ENCODE measurements at regions of chr10 and their contacts with region 1.

Region 1: DNA sequence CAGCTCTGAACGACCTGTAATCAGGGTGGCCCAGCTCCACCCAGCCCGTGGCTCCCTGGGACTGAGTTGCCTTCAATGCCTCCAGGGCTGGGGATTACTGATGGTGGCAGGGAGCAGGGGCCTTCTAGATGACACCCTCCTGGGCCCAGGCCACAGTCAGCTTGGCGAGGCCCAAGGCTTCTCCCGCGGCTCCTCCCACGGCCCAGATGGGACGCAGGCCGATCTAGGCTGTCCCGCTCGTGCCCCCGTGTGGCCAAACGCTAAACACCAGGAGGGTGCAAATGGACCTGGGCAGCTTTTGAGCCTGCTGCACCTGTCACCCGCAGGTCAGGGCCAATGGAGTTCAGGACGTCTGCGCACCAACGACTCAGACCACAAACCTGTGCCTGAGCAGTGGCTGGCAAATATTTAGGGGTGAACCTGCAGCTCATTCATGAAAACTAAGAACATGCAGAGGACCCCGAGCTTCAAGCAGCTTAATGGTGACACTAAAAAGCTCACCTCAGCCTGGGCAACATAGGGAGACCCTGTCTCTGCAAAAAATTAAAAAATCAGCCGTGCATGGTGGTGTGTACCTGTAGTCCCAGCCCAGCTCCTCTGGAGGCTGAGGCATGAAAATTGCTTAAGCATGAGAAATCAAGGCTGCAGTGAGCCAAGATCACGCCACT is 43.2 kb downstream of the ASB13 start:
- H3K4me3 ChIP-seq: no peak overlapping the region
- H3K27ac ChIP-seq: no peak overlapping the region
- H3K4me1 ChIP-seq: no peaks in the 10 kb centered on the region
- CTCF ChIP-seq: peak; percentile 89

Region 2: GRCh38 chr10:5446390-5446926 is 176.8 kb before region 1 on chr10:
- CTCF ChIA-PET with region 1: interaction called, 207 read pairs
- POLR2A ChIA-PET with region 1: interaction called, 12 read pairs
- H3K4me3 ChIP-seq: peak overlapping the region; percentile 42
- H3K27ac ChIP-seq: peak overlapping the region; percentile 11; the same call in 1 of the 2 replicates
- H3K4me1 ChIP-seq: peaks cover 18% of the 10 kb centered on the region; the same call in 1 of the 2 replicates
- CTCF ChIP-seq: no peak

Region 3: GRCh38 chr10:5502061-5502902 is 120.9 kb before region 1 on chr10:
- CTCF ChIA-PET with region 1: interaction called, 11 read pairs
- POLR2A ChIA-PET with region 1: no interaction called
- H3K4me3 ChIP-seq: no peak overlapping the region
- H3K27ac ChIP-seq: no peak overlapping the region
- H3K4me1 ChIP-seq: no peaks in the 10 kb centered on the region
- CTCF ChIP-seq: no peak

Region 4: DNA sequence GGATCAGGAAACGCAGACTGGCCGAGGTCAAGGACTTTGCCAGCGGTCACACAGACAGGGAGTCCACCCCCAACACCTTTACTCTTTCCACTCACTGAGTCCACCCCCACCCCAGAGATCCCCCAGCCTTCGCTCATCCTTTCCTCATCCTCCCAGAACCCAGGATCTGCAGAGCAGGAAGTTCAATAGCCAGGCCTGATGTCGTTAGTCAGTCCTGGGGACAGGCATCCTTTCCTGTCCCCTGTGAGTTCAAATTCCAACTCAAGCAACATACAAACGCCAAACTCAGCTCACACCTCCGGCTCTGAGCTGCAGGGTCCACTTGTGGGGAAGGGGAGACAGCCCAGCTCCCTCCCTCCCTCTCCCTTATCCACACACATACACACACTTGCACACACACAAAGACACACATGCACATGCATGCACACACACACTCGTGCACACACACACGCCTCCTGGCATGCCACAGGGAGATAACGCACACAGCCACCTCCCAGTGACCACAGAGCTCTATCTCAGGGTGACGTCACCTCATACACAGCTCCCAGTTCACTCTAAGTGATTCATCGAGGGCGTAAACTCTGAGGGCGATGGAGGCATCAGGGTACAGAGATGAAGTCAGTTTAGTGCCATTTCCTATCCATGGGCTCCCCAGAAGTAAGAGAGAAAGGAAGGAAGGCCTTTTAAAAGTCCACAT is 74.5 kb before region 1 on chr10:
- CTCF ChIA-PET with region 1: interaction called, 11 read pairs
- POLR2A ChIA-PET with region 1: no interaction called
- H3K4me3 ChIP-seq: no peak overlapping the region
- H3K27ac ChIP-seq: peak overlapping the region; percentile 44; the same call in 1 of the 2 replicates
- H3K4me1 ChIP-seq: peaks cover 29% of the 10 kb centered on the region
- CTCF ChIP-seq: no peak

Region 5: GRCh38 chr10:5595591-5596590 is 27.3 kb before region 1 on chr10:
- CTCF ChIA-PET with region 1: interaction called, 14 read pairs
- POLR2A ChIA-PET with region 1: no interaction called
- H3K4me3 ChIP-seq: no peak overlapping the region
- H3K27ac ChIP-seq: no peak overlapping the region; the same call in 1 of the 2 replicates
- H3K4me1 ChIP-seq: peaks cover 10% of the 10 kb centered on the region
- CTCF ChIP-seq: no peak

Measured in HEK293 (cell line).